Activated T-helper 2 cell treated with anti-CD3 and anti-CD28 coated beads, Interferon-gamma antibody, Interleukin-2, Interleukin-4, amounts not matched to agents 10 μg/mL and 5 μg/mL and 100 μg/mL, durations not matched to agents 14 hours and 24 hours and 36 hours (primary cell): ENCODE measurements at regions of chrX and their contacts with region 1.

Region 1: GRCh38 chrX:55717521-55718497 is at the start of gene RRAGB:
- DNase-seq: peak; percentile 88
- H3K4me3 Mint-ChIP-seq: peak within 1 kb of the TSS; percentile 87
- H3K27ac Mint-ChIP-seq: peak within 1 kb of the TSS; percentile 83
- H3K4me1 Mint-ChIP-seq: peaks cover 17% of the 10 kb centered on the region
- H3K27me3 Mint-ChIP-seq: no peaks in the 10 kb centered on the region
- total RNA-seq, gene RRAGB: 5.2 and 6.4 TPM in 2 replicates

Region 2: GRCh38 chrX:55160685-55161552 is 556.9 kb before region 1 on chrX:
- intact Hi-C with region 1: loop called (anchors 5 kb)
- DNase-seq: peak; percentile 83
- H3K4me3 Mint-ChIP-seq: peak overlapping the region; percentile 82
- H3K27ac Mint-ChIP-seq: peak overlapping the region; percentile 90
- H3K4me1 Mint-ChIP-seq: peaks cover 14% of the 10 kb centered on the region
- H3K27me3 Mint-ChIP-seq: peaks cover 13% of the 10 kb centered on the region

Region 3: DNA sequence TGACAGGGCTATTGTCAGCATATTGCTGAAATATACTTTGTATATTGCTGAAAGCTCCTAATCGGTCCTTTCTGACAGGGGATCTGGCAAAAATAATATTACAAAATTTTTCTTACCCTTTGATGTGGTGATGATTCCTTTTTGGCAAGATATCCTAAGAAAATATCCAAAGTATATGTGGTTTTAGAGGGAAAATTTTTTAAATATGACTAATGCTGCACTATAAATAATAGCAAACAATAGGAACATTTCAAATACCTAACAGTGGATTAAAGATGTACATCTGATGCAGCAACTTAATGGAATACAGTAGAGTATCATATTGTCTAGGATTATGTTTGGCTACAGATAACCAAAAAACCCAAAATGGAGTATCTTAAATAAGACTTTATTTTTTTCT is 49.3 kb after region 1 on chrX:
- intact Hi-C with region 1: no loop called
- DNase-seq: no peak
- H3K4me3 Mint-ChIP-seq: no peak overlapping the region
- H3K27ac Mint-ChIP-seq: no peak overlapping the region
- H3K4me1 Mint-ChIP-seq: no peaks in the 10 kb centered on the region
- H3K27me3 Mint-ChIP-seq: no peaks in the 10 kb centered on the region

Region 4: DNA sequence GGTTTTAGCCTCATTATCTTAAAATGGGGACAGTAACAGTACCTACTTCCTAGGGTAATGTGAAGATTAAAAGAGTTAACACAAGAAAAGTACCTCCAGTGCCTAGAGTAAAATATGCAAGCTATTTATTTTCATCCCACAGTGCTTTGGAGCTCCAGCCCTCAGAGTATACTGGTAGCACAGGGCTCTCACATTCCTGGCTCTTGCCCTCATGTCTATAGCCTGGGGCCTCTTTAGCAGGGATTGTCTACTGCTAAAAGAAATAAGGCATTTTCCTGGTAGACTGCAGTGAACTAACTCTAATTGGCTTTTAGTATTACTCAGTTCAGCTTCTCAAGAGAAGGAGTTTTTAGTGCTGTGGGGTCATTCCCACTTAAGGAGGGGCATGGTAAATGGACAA is 60.5 kb after region 1 on chrX:
- intact Hi-C with region 1: no loop called
- DNase-seq: no peak
- H3K4me3 Mint-ChIP-seq: no peak overlapping the region
- H3K27ac Mint-ChIP-seq: no peak overlapping the region
- H3K4me1 Mint-ChIP-seq: no peaks in the 10 kb centered on the region
- H3K27me3 Mint-ChIP-seq: no peaks in the 10 kb centered on the region

Region 5: DNA sequence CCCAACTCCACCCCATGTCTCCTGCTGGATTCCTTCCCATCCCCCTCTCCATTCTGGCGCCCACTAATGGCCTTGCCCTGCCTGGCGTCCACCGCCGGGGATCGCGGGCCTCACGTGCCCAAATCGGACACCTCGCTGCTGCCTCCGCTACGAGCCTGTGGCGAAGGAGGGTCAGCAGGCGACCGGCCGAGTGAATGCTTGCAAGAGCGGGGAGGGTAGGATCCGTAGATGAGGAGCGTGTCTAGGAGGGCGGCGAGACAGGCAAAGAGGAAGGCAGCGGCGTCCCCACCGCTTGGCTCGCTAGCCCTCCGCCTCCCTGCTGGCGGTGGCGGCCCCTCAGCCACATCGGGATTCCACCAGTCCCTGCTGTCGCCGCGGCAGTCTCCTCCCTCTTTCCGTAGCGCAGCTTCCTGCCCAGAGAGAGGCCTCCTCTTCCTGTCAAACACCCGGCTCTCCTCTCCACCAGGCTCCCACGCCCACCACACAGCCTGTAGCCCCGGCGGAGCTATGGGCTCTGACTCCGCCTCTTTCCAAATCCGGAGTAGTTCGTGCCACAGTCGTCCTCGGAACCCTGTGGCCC is 1403.4 kb after region 1 on chrX and contains the start of gene SPIN2B:
- intact Hi-C with region 1: loop called (anchors 5 kb)
- DNase-seq: peak; percentile 72
- H3K4me3 Mint-ChIP-seq: peak within 1 kb of the TSS; percentile 88
- H3K27ac Mint-ChIP-seq: peak within 1 kb of the TSS; percentile 84
- H3K4me1 Mint-ChIP-seq: peaks cover 7% of the 10 kb centered on the region
- H3K27me3 Mint-ChIP-seq: no peaks in the 10 kb centered on the region
- total RNA-seq, gene SPIN2B: 9.5 and 10.0 TPM in 2 replicates